CD4-positive, alpha-beta T cell (primary cell): ENCODE measurements at regions of chr18 and their contacts with region 1.

Region 1: GRCh38 chr18:63422087-63422809 is at the start of gene VPS4B:
- DNase-seq: peak; percentile 98 to 100 (median 99)
- ATAC-seq: peak; percentile 92
- H3K4me3 ChIP-seq: peak within 1 kb of the TSS; percentile 83
- H3K4me3 Mint-ChIP-seq: peak within 1 kb of the TSS; percentile 96
- H3K27ac ChIP-seq: peak within 1 kb of the TSS; percentile 84 to 93
- H3K27ac Mint-ChIP-seq: peak within 1 kb of the TSS; percentile 95
- H3K4me1 ChIP-seq: peaks cover 42% of the 10 kb centered on the region
- H3K4me1 Mint-ChIP-seq: peaks cover 25% of the 10 kb centered on the region
- H3K27me3 ChIP-seq: no peaks in the 10 kb centered on the region
- H3K27me3 Mint-ChIP-seq: peaks cover 8% of the 10 kb centered on the region
- CTCF ChIP-seq: no peak
- total RNA-seq, gene VPS4B: 46.0 to 50.8 TPM

Region 2: DNA sequence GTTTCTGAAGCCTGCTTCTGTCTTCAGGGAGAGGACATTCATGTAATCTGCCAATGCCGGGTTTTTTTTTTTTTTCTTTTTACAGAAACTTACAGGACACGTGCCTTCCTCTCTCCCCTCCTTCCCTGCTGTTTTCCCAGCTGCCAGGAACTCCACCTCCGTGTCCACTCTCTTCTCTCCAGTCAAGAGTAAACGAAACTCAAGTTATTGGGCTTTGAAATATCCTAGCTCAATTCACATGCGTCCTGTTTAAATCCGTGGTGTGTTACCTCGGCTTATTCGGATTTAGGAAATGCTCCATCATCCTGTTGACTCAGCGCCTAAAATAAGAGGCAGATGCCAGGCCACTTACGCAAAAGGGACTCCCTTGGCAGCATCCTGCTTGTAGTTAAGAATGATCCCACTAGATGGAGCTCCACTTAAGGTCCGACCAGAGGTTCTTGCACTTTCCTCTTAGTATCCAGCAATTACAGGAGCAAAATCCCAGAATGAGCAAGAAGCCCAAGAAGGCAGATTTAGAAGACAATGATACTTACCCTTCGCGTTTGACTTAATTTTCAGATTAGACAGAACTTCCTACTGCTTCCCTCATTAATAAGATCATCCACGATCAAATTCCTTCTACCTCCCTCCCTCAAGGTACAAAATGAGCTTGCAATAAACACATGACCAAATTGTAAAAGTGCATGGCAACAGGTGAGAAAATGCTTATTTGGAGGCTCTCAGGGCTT is 996.6 kb before region 1 on chr18:
- CTCF ChIA-PET with region 1: no interaction called
- POLR2A ChIA-PET with region 1: no interaction called
- intact Hi-C with region 1: loop called in 1 of 2 experiments (anchors 5 kb)
- DNase-seq: peak in 13 of 14 experiments; percentile 5 to 85 (median 31)
- ATAC-seq: peak; percentile 51
- H3K4me3 ChIP-seq: no peak overlapping the region
- H3K4me3 Mint-ChIP-seq: no peak overlapping the region
- H3K27ac ChIP-seq: no peak overlapping the region
- H3K27ac Mint-ChIP-seq: no peak overlapping the region
- H3K4me1 ChIP-seq: peaks cover 12% of the 10 kb centered on the region
- H3K4me1 Mint-ChIP-seq: peaks cover 18% of the 10 kb centered on the region
- H3K27me3 ChIP-seq: no peaks in the 10 kb centered on the region
- H3K27me3 Mint-ChIP-seq: no peaks in the 10 kb centered on the region
- CTCF ChIP-seq: peak; percentile 83

Region 3: DNA sequence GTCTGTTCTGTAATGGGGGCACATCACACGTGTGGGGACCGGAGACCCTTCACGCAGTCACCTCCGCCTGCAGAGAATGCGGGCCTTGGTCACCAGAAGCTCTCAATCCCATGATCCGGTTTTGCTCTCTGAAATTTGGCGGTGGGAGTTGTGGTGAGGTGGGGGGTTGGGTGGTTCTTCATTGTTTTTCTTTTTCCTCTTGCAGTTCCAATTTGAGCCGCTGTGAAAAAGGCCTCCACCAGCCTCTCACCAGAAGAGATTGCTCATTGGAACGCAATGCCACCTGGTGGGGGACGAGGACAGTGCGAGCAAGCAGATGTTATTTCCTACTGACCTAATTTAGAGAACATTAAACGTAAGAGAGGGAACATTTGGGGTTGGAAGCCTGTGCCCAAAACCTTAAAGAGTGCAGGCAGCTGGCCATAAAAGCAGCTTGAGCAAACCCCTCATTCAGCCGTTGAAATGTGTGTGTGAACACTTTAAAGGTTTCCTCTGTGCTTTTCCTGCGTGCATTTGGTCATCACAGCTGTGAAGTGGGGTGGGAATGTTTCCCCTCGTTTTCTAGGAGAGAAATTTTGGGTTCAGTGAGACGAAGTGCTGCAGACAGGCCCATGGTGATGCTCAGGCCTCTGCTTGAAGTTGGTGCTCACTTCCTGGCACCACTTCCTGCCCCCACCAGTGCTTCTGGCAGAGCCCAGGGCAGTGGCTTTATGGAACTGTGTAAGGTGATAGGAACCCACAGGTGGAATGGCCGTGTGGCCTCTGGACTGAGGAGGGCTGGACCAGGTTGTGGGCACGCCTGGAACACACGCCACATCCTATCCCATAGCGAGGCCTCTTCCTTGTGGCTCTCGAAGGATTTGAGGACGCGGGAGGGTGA is 837.8 kb before region 1 on chr18:
- CTCF ChIA-PET with region 1: no interaction called
- POLR2A ChIA-PET with region 1: no interaction called
- intact Hi-C with region 1: loop called (anchors 1 to 10 kb)
- DNase-seq: peak; percentile 69 to 92 (median 78)
- ATAC-seq: peak; percentile 97
- H3K4me3 ChIP-seq: no peak overlapping the region
- H3K4me3 Mint-ChIP-seq: peak overlapping the region; percentile 16
- H3K27ac ChIP-seq: no peak overlapping the region
- H3K27ac Mint-ChIP-seq: peak overlapping the region; percentile 32
- H3K4me1 ChIP-seq: peaks cover 28% of the 10 kb centered on the region
- H3K4me1 Mint-ChIP-seq: peaks cover 33% of the 10 kb centered on the region
- H3K27me3 ChIP-seq: no peaks in the 10 kb centered on the region
- H3K27me3 Mint-ChIP-seq: no peaks in the 10 kb centered on the region
- CTCF ChIP-seq: peak; percentile 98

Region 4: DNA sequence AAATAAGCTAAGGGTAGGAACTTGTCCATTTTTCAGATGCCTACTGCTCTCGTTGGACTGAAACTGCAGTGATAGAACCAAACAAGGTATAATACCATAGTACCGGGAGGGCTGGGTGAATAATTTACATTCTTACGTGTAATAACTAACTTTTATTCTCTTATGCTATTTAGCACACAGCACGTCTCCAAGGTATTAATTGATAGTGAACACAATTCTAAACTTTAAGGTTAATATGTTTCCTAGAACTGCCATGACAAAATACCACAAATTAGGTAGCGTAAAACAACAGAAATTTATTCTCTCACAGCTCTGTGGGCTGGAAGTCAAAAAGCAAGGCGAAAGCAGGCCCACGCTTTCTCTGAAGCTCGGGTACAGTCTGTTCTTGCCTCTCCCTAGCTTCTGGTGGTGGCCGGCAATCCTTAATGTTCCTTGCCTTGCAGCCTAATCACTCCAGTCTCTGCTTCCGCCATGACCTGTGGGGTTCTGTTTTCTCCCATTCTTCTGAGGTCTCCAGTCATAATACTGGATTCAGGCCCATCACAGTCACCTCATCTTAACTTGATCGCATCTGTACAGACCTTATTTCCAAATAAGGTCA is 97.1 kb before region 1 on chr18:
- CTCF ChIA-PET with region 1: no interaction called
- POLR2A ChIA-PET with region 1: interaction called, 3 read pairs
- intact Hi-C with region 1: loop called in 1 of 2 experiments (anchors 2 kb)
- DNase-seq: no peak
- ATAC-seq: no peak
- H3K4me3 ChIP-seq: no peak overlapping the region
- H3K4me3 Mint-ChIP-seq: no peak overlapping the region
- H3K27ac ChIP-seq: no peak overlapping the region
- H3K27ac Mint-ChIP-seq: no peak overlapping the region
- H3K4me1 ChIP-seq: peaks cover 17% of the 10 kb centered on the region
- H3K4me1 Mint-ChIP-seq: peaks cover 15% of the 10 kb centered on the region
- H3K27me3 ChIP-seq: no peaks in the 10 kb centered on the region
- H3K27me3 Mint-ChIP-seq: no peaks in the 10 kb centered on the region
- CTCF ChIP-seq: no peak

Region 5: DNA sequence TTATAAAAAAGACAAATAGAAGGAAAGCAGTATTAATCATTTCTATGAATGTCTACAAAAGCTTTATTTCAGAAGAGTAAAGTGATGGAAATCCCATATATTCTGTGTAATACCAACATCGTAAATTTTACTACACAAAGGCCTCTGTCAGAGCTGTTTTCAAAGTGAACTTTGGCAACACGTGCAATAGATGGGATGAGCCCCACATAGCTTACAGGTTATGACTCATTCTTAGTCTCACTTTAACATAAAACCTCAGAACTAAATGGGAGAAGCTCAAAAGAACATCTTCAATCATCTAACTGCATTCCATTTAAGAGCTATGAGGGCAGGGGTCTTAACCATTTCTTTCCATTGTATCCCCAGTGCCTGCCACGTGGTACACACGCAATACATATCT is 11.5 kb before region 1 on chr18:
- CTCF ChIA-PET with region 1: interaction called, 4 read pairs
- POLR2A ChIA-PET with region 1: interaction called, 25 read pairs
- intact Hi-C with region 1: no loop called
- DNase-seq: no peak
- ATAC-seq: no peak
- H3K4me3 ChIP-seq: no peak overlapping the region
- H3K4me3 Mint-ChIP-seq: no peak overlapping the region
- H3K27ac ChIP-seq: no peak overlapping the region
- H3K27ac Mint-ChIP-seq: peak overlapping the region; percentile 73
- H3K4me1 ChIP-seq: peaks cover 11% of the 10 kb centered on the region
- H3K4me1 Mint-ChIP-seq: peaks cover 57% of the 10 kb centered on the region
- H3K27me3 ChIP-seq: no peaks in the 10 kb centered on the region
- H3K27me3 Mint-ChIP-seq: no peaks in the 10 kb centered on the region
- CTCF ChIP-seq: no peak

Region 6: DNA sequence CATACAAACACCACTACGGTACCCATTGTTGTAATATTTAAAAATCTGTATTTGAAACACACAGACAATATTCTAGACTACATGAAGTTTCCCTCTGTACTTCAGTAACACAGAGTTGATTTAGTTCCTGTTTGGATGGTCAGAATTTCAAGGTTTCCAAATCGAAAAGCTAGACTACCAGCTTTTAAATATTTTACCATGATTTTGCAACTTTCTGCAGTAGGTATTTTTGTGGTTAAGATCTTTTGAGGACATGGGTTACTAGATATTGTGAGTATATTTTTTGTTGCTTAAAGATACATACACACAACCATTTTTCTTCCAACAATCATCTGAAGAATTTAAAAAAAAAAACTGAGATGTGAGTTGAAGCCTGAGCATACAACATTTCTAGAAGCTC is 65.4 kb after region 1 on chr18:
- CTCF ChIA-PET with region 1: no interaction called
- POLR2A ChIA-PET with region 1: no interaction called
- intact Hi-C with region 1: no loop called
- DNase-seq: no peak
- ATAC-seq: no peak
- H3K4me3 ChIP-seq: no peak overlapping the region
- H3K4me3 Mint-ChIP-seq: no peak overlapping the region
- H3K27ac ChIP-seq: no peak overlapping the region
- H3K27ac Mint-ChIP-seq: no peak overlapping the region
- H3K4me1 ChIP-seq: no peaks in the 10 kb centered on the region
- H3K4me1 Mint-ChIP-seq: no peaks in the 10 kb centered on the region
- H3K27me3 ChIP-seq: no peaks in the 10 kb centered on the region
- H3K27me3 Mint-ChIP-seq: peaks cover 16% of the 10 kb centered on the region
- CTCF ChIP-seq: no peak